IMR-90 (cell line): ENCODE measurements at regions of chr17 and their contacts with region 1.

Region 1: GRCh38 chr17:67746704-67747571 is 29.2 kb downstream of the NOL11 start:
- DNase-seq: no peak
- ATAC-seq: no peak
- H3K4me3 ChIP-seq: no peak overlapping the region
- H3K27ac ChIP-seq: no peak overlapping the region
- H3K4me1 ChIP-seq: no peaks in the 10 kb centered on the region
- H3K27me3 ChIP-seq: no peaks in the 10 kb centered on the region
- CTCF ChIP-seq: no peak
- POLR2A ChIP-seq: no peak
- RAD21 ChIP-seq: no peak

Region 2: GRCh38 chr17:67912656-67913055 is 165.7 kb after region 1 on chr17:
- CTCF ChIA-PET with region 1: no interaction called
- POLR2A ChIA-PET with region 1: no interaction called
- dilution Hi-C with region 1: no loop called
- in situ Hi-C with region 1: no loop called
- intact Hi-C with region 1: loop called (anchors 10 kb)
- DNase-seq: no peak
- ATAC-seq: no peak
- H3K4me3 ChIP-seq: no peak overlapping the region
- H3K27ac ChIP-seq: no peak overlapping the region
- H3K4me1 ChIP-seq: no peaks in the 10 kb centered on the region
- H3K27me3 ChIP-seq: no peaks in the 10 kb centered on the region
- CTCF ChIP-seq: no peak
- POLR2A ChIP-seq: no peak
- RAD21 ChIP-seq: no peak